ENCODE measurements at regions of chr6 and their contacts with region 1.

Region 1: DNA sequence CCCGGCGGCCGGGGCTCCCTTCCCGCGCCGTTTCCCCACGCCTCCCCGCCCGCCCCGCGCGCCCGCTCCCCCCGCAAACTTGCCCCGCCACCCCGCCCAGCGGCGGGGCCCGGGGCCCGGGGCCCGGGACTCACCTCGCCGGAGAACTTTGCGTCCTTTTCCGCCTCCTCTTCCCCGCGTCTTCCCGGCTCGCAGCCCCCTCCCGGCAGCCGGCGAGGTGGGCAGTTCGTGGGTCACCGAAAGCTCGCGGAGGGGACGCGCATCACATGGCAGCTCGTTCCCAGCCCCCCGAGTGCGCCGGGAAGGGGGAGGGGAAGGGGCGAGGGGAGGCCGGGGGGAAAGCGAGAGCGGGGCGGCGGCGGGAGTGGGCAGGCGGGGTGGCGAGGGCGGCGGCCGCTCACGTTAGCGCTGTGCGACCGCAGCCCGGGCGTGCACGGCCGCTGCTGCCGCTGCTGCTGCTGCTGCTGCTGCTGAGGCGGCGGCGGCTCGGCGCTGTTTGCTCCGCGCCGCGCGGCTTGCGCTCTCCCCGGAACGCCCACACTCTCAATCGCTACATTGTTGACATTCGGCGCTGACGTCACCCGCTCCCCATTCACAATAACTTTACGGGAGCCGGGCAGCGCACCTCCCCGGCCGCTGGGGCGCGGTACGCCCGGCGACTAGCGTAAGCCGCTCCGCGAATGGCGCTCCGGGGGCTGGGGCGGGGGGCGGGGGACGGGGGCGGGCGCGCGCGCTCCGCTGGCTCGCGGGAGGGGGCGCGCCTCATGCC is at the start of gene BACH2:
- DNase-seq: peak; percentile 87 to 98 (median 91)

Region 2: DNA sequence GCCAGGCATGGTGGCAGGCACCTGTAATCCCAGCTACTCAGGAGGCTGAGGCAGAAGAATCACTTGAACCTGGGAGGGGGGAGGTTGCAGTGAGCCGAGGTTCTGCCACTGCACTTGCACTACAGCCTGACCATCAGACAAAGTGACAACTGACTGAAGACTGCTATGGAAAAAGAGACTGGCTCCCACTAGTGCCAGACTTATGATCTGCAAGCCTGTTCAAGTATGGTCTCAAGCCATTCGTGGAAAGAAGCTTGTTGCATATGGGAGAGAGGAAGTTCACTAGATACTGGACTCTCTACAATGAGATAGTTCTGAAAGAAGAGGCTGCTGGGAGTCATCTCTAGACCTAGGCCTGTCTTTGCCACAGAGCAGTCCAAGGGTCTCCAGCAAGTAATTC is 503.7 kb before region 1 on chr6:
- intact Hi-C with region 1: no loop called
- DNase-seq: no peak

Region 3: GRCh38 chr6:89963391-89963790 is 333.1 kb before region 1 on chr6:
- intact Hi-C with region 1: no loop called
- DNase-seq: no peak

Region 4: DNA sequence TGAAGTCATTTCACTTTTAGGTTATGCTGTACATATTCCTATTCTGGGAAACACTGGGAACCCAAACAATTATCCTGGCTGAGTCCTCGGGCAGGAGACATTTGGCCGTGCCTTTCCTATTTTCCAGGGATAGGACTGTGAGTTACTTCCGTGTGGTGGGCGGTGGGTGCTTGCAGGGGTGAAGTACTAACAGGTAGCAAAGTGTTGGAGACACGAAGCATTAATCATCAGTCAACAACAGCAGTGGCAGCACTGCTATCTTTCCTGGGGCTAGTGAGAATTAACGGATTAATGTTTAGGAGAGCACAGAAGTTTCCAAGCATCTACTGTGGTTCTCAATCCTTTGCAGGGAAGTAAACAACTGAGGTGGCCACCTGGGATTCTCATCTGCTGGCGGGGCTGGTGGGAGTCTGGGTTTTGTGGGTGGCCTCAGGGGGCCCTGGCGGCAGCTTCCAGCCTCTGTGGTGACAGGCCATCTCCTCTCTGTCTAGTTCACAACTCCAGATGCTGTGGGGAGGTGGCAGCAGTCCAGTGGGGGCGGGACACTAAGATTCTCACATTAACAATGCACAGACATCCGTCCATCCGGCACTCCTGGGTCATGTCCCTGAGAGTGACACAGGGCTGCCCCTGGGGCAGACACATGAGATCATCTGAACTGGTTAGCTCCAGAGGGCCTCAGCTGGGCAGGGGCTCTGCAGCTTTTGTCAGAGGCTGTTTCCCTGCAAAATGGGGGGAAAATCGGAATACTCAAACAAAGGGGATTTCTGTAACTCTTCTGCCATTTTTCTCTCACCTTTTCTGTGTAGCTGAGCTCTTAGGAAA is 311.4 kb before region 1 on chr6:
- intact Hi-C with region 1: loop called (anchors 5 kb)
- DNase-seq: peak in 9 of 10 donors; percentile 68 to 97 (median 82)

Region 5: DNA sequence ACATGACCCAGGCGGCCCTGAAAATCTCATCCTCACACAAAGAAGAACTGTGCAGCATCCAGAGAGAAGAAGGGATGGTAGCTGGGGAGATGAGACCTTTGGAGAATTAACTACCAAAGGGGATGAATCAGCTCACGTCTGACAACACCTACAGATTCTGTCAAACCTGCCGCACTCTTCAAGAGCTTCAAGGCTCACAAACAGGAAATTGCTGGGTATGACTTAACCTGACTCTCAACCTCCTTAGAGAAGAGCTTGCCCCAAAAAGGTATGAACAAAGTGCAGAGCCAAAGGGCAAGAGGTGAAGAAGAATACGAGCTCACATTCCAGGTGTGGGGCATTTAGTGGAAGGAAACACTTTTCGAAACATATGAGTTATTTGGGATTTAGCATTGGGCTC is 139.7 kb before region 1 on chr6:
- intact Hi-C with region 1: loop called (anchors 5 kb)
- DNase-seq: no peak

Region 6: DNA sequence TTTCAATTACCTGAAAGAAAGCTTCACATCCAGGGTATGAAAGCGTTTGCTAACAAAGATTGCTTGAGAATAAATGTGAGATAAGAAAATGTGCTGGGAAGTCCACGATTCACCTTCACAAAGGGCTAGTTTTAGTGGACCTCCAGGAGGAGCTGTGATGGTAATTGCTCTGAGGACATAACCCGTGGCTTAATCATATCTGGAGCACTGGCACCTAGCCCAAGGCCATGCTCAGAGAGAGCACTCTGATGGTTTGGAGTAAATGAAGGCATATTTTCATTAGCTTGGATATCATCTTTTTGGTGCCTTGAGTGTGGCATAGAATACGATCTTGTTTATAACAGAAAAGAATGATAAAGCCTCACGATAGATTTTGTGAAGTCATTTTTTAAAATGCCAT is 47.1 kb after region 1 on chr6:
- intact Hi-C with region 1: no loop called
- DNase-seq: no peak

Region 7: GRCh38 chr6:90393232-90393884 is 96.8 kb after region 1 on chr6:
- intact Hi-C with region 1: loop called (anchors 5 kb)
- DNase-seq: peak in 4 of 10 donors; percentile 45 to 90 (median 62)

Region 8: GRCh38 chr6:90537723-90538258 is 241.3 kb after region 1 on chr6:
- intact Hi-C with region 1: no loop called
- DNase-seq: no peak